ENCODE measurements at regions of chr6 and their contacts with region 1.

Region 1: GRCh38 chr6:89371849-89372505 is 19.5 kb upstream of the UBE2J1 start:
- DNase-seq: peak; percentile 90
- ATAC-seq: peak; percentile 88

Region 2: DNA sequence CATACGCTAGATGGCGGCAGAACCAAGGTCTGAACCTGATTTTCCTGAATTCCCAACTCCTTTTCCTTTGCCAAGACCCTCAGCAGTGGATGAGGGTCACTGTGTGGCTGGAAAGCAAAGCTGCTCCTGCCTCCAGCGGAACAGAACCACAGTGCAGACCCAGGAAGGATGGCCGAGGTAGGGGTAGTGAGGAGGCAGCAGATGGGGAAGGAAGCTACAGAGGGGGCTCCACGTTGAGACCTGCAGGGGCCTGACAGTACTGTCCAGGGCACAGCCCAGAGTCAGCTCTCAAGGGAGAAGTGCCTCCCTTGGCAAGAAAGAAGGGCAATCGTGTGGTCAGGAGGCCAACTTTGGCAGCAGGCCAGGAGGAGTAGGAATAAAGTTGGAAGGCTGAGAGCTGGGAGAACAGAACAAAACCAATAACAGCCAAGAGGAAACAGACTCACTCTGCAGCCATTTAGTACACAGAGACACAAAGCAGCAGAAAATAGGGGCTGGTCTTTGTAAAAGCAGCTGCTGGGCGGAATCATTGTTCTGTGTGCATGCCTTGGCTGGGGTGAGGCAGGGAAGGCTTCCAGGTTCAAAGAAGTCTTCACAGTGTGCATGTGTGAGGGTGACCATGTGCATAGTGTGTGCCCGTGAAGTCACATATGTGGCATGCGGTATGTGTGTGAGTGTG is 60.0 kb before region 1 on chr6:
- intact Hi-C with region 1: loop called (anchors 1 kb)
- DNase-seq: peak; percentile 77
- ATAC-seq: peak; percentile 62

Region 3: GRCh38 chr6:89411145-89412070 is 39.4 kb after region 1 on chr6:
- intact Hi-C with region 1: loop called (anchors 2 kb)
- DNase-seq: peak; percentile 77
- ATAC-seq: peak; percentile 52

Region 4: DNA sequence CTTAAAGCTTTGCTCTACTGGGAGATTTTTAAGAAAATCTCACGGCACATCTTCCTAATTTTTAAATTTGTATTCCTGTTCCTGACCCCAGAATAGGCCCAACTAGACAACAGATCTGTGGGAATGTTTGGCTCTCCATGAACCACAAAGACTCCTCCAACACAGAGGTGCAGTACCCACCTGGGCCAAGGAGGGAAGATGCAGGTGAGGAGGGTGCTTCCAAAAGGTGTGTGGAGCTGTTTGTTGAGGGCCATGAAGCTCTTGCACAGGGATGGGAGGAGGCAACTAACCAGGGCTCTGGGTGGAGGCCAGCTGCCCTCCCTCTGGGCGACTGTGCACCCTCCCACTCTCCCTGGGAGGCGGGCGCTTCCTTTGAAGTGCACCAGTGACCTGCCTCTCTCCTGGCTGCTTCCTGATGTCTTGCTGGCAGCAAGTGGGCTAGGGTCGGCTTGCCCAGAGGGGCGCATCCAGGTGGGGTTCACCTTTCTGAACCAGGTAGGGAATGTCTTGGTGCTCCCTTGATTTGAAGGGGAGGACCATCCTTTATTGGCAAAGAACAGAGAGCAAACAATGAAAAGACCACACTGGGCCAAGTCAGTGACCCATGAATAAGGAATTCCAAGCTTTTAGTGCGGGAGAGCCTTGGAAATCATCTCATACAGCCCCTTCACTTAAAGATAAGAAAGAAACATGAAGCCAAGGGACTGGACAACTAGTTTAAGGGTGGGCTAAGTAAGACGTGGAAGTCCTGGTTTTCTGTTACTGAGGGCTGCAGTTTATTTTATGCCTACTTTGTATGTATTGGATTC is 137.0 kb after region 1 on chr6:
- intact Hi-C with region 1: no loop called
- DNase-seq: no peak
- ATAC-seq: no peak